Sigmoid colon (tissue), 7 donors: ENCODE measurements at regions of chr12 and their contacts with region 1.

Region 1: GRCh38 chr12:77152623-77153193 is 87.3 kb upstream of the E2F7 start:
- DNase-seq: no peak
- H3K4me3 ChIP-seq: no peak overlapping the region
- H3K27ac ChIP-seq: no peak overlapping the region
- H3K4me1 ChIP-seq: no peaks in the 10 kb centered on the region
- H3K27me3 ChIP-seq: no peaks in the 10 kb centered on the region
- CTCF ChIP-seq: no peak
- EP300 ChIP-seq: no peak
- POLR2A ChIP-seq: no peak

Region 2: DNA sequence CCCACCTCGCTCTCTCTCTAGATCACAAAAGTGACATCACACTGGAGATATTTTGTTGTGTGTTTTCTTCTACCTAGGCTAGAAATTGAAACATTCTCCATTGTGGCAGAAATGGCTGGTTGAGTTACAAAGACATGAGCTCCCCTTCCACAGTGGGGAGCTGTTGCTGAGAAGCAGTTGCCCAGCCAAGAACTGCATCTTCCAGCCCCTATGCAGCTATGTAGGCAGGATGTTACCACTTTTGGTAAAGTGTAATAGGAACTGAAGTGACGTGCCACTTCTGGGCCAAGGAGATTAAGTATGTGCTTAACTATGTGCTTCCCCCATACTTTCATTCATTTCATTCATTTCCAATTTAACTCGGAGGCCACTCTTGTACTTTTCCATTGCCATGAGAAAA is 51.4 kb after region 1 on chr12:
- intact Hi-C with region 1: no loop called
- DNase-seq: no peak
- H3K4me3 ChIP-seq: no peak overlapping the region
- H3K27ac ChIP-seq: no peak overlapping the region
- H3K4me1 ChIP-seq: no peaks in the 10 kb centered on the region
- H3K27me3 ChIP-seq: no peaks in the 10 kb centered on the region
- CTCF ChIP-seq: no peak
- EP300 ChIP-seq: no peak
- POLR2A ChIP-seq: no peak

Region 3: DNA sequence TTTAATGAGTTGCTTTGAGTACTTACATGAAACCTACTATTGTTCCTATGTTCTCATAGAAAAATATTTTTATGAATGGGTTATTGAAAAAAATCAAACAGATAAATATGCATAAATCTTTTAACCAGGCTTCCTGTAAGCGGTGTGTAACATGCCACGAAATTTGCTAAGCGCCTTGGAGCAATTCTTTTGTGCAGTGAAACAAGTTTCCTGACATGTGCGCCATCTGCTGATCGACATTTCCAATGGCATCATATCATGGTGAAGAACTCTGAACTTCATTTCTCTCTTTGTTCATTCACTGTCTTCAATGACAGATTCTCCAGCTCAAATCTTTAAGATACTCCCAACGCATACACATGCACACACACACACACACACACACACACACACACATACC is 532.4 kb after region 1 on chr12:
- intact Hi-C with region 1: loop called (anchors 5 kb)
- DNase-seq: no peak
- H3K4me3 ChIP-seq: no peak overlapping the region
- H3K27ac ChIP-seq: no peak overlapping the region
- H3K4me1 ChIP-seq: no peaks in the 10 kb centered on the region
- H3K27me3 ChIP-seq: no peaks in the 10 kb centered on the region
- CTCF ChIP-seq: no peak
- EP300 ChIP-seq: no peak
- POLR2A ChIP-seq: no peak